Cardiac septum (tissue), 1 donor: ENCODE measurements at regions of chr10 and their contacts with region 1.

Region 1: DNA sequence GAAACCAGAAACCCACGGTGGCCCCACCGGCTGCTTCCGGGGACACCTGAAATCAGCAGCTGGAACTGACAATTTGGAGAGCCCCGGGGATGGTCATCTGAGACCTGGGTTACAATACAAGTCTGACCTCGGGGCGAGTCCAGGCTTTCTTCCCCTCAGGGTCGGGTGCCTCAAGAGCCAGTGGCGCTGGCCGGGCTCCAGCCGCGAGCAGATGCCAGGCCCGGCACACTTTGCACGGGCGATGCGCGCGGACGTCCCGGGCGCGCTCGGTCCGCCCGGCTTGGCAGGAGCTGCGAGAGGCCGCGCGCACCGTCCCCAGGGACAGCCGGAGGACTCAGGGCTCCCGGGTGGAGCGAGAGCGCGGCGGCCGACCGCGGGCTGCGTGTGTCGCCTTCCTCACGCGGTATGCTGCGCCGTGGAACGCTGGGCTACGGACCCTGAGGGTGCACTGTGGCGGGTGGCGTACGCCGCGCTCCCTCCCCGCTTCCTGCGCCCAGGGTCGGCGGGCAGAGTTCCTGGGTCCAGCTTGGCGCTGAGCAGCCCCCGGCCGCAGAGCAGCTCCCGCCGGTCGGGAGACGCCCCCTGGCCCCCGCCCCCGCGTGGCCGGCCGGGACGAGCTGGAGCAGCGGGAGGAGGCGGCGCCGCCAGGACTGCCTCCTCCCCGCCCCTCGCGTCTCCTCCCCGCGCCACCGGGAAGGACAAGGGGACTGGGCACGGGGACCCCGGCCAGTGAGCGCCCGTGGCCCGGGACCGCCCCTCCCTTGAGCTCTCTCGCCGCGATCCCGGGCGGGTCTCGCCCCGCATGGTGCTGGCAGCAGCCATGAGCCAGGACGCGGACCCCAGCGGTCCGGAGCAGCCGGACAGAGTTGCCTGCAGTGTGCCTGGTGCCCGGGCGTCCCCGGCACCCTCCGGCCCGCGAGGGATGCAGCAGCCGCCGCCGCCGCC is at the start of gene RBM20:
- DNase-seq: peak; percentile 88
- total RNA-seq, gene RBM20: 105 TPM

Region 2: DNA sequence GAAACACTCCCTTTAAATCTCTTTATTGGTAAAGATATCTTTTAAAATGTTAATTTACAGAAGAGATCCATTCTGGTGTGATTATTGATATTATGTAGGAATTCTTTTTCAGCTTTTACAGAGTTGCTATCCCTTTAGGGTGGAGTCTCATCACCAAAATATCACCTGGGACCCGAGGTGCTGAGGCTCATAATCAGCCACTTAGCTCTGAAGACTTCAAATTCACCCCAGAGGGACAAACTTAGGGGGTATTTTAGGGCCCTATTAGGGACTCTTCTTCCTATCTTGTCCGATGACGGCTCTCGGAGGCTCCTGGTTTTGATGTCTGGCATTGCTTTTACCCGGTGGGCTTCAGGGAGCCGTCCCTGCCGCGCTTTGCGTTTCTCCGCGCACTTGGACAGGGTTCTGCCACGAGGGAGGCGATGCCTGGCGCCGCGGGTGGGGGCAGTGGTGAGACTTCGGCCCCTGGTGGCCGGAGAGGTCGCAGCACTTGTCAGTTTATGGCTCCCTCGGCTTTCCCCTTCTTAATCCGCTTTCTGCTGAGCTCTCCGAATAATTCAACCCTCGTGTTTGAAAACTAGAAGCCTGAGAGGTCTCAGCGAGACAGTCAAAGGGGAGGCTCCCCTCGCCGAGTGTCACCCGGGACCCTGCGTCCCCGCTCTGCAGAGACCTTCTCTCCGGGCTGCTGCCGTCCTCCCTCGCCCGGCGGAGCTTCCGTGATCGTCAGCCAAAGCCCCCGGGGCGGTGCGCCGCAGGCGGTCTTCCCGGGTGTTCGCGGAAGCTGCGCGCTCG is 28.1 kb after region 1 on chr10:
- intact Hi-C with region 1: loop called (anchors 2 kb)
- DNase-seq: peak; percentile 88